HEK293T (cell line): ENCODE measurements at regions of chr7 and their contacts with region 1.

Region 1: GRCh38 chr7:106100863-106101629 is 11.1 kb downstream of the SYPL1 start:
- DNase-seq: no peak

Region 2: DNA sequence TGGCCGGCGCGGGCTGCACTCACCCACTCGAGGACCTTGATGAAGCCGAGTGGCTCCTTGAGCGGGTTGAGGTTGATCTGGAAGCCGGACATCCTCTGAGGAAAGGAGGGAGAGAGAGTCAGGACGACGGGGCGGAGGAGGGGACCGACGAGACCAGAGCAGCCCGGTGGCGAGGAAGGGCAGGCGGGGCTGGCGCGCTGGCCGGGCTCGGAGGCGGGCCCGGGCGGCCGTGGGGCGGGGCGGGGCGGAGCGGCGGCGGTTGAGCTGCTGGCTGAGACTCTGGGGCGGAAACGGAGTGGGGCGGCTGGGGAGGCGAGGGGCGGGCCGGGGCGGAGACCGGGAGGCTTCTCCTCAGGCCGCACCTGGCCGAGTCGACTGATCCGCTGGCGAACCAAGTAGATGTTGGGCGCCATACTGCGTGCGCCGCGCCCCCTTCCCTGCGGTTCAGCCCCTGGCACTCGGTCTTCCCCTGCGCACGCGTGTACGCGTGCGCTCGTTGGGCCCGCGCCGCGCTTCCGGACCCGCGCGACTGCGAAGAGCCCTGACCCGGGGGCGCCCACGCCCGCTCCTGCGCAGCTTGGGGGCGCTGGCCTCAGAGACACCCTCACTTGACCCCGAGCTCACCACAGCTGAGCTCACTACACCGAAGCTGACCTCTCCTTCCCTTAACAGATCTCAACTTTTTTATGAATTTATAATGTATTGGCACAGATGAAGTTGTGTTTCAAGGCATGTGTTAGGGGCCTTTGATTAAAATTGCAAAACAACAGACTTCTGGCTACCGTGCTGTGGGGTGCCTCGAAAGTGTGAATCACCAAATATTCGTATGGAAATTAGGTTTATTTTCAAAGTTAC is 11.3 kb after region 1 on chr7 and contains the start of gene SYPL1:
- CTCF ChIA-PET with region 1: interaction called, 4 read pairs
- POLR2A ChIA-PET with region 1: interaction called, 13 read pairs
- DNase-seq: peak; percentile 86